Activated CD8-positive, alpha-beta memory T cell treated with anti-CD3 and anti-CD28 coated beads, Interleukin-2, amount 10 ng/mL, durations not matched to agents 7 days and 5 days (primary cell): ENCODE measurements at regions of chr7 and their contacts with region 1.

Region 1: DNA sequence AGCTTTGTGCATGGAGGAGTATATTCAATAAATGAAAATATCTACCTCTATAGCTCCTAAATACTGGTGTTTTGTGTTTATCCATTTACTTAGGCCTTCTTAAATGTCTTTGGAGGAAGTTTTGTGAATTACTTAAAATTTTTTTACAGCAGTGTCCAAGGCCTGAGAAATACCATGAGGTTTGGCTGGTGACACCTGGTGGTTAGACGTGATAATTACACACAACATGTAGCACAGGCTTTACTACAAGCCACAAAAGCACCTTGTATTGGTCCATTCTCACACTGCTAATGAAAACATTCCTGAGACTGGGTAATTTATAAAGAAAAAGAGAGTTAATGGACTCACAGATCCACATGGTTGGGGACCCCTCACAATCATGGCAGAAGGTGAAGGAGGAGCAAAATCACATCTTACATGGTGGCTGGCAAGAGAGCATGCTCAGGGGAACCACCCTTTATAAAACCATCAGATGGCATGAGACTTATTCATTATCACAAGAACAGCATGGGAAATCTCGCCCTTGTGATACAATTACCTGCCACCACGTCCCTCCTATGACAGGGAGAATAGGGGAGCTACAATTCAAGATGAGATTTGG is 20.6 kb downstream of the HYAL4 start:
- DNase-seq: peak; percentile 53
- ATAC-seq: peak; percentile 66
- H3K4me3 Mint-ChIP-seq: no peak overlapping the region
- H3K27ac Mint-ChIP-seq: no peak overlapping the region
- H3K4me1 Mint-ChIP-seq: no peaks in the 10 kb centered on the region
- H3K27me3 Mint-ChIP-seq: peaks cover 4% of the 10 kb centered on the region

Region 2: DNA sequence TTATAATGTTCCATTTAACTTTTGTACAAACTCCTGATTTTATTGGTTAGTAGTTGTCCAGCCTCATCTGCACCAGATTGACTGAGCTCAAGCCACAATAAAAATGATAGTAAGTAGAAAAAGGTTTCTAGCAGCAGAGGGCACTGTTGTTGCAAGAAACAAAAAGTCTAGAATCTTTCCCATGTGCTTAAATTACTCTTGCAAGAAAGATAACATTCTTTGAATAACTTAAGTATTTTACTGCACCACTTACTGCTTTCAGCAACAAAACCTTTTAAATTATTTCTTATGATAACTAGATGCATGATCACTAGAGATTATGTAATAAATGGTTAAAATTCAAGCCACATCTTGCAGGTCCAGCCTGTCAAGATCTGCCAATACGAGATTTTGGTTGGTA is 182.9 kb before region 1 on chr7:
- CTCF ChIA-PET with region 1: interaction called, 28 read pairs
- DNase-seq: no peak
- ATAC-seq: no peak
- H3K4me3 Mint-ChIP-seq: no peak overlapping the region
- H3K27ac Mint-ChIP-seq: no peak overlapping the region
- H3K4me1 Mint-ChIP-seq: no peaks in the 10 kb centered on the region
- H3K27me3 Mint-ChIP-seq: no peaks in the 10 kb centered on the region

Region 3: DNA sequence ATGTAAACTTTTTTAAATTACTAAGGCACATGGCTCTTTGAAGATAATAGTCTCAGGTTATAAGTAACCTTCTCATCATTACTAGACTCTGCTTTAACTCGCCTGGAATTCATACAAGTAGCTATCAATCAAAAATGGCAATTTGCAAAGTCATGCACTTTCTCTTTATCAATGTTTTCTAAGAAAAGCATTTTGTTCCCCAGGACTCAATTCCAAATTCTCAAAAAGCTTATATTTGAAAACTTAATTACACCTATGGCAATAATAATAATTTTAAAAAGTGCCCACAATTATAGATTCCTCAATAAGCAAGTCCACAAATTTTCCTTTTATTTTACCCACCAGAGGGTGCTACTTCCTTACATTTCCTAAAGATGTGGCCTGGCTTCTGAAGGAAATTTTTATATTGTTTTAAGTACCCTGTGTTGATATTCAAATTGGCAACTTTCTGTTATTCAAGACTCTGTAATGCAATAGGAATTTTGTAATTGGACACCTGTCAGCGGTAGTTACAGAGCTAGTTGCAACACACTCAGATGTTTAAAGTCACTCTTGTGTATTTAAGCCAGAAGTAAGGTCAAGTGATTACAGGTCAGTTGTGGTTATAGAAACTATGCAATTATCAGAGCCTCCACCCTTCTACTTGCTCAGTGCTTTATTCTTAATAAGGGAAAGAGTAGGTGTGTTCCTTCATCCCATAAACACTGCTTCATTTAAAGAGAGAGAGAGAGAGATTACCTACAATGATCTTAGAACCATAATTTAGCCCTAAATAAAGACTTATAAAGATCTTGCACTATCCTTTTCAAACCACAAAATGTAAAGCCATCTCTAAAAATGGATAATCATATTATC is 67.7 kb before region 1 on chr7:
- CTCF ChIA-PET with region 1: interaction called, 20 read pairs
- DNase-seq: no peak
- ATAC-seq: no peak
- H3K4me3 Mint-ChIP-seq: no peak overlapping the region
- H3K27ac Mint-ChIP-seq: no peak overlapping the region
- H3K4me1 Mint-ChIP-seq: no peaks in the 10 kb centered on the region
- H3K27me3 Mint-ChIP-seq: no peaks in the 10 kb centered on the region

Region 4: GRCh38 chr7:123846216-123846891 is 19.3 kb before region 1 on chr7:
- CTCF ChIA-PET with region 1: no interaction called
- DNase-seq: no peak
- ATAC-seq: no peak
- H3K4me3 Mint-ChIP-seq: no peak overlapping the region
- H3K27ac Mint-ChIP-seq: no peak overlapping the region
- H3K4me1 Mint-ChIP-seq: no peaks in the 10 kb centered on the region
- H3K27me3 Mint-ChIP-seq: peaks cover 11% of the 10 kb centered on the region

Region 5: GRCh38 chr7:124152859-124153692 is 287.5 kb after region 1 on chr7:
- CTCF ChIA-PET with region 1: no interaction called
- DNase-seq: no peak
- ATAC-seq: no peak
- H3K4me3 Mint-ChIP-seq: no peak overlapping the region
- H3K27ac Mint-ChIP-seq: no peak overlapping the region
- H3K4me1 Mint-ChIP-seq: no peaks in the 10 kb centered on the region
- H3K27me3 Mint-ChIP-seq: no peaks in the 10 kb centered on the region

Region 6: GRCh38 chr7:124201768-124202349 is 336.2 kb after region 1 on chr7:
- CTCF ChIA-PET with region 1: no interaction called
- DNase-seq: no peak
- ATAC-seq: no peak
- H3K4me3 Mint-ChIP-seq: no peak overlapping the region
- H3K27ac Mint-ChIP-seq: no peak overlapping the region
- H3K4me1 Mint-ChIP-seq: no peaks in the 10 kb centered on the region
- H3K27me3 Mint-ChIP-seq: no peaks in the 10 kb centered on the region